Activated T-helper 2 cell treated with anti-CD3 and anti-CD28 coated beads, Interferon-gamma antibody, Interleukin-2, Interleukin-4, amounts not matched to agents 10 μg/mL and 5 μg/mL and 100 μg/mL, durations not matched to agents 14 hours and 24 hours and 36 hours (primary cell): ENCODE measurements at regions of chr19 and their contacts with region 1.

Region 1: GRCh38 chr19:11435058-11435832 is at the starts of genes ODAD3 and PRKCSH:
- DNase-seq: peak; percentile 99
- H3K4me3 Mint-ChIP-seq: peak within 1 kb of the TSS; percentile 96
- H3K27ac Mint-ChIP-seq: peak within 1 kb of the TSS; percentile 89
- H3K4me1 Mint-ChIP-seq: peaks cover 7% of the 10 kb centered on the region
- H3K27me3 Mint-ChIP-seq: no peaks in the 10 kb centered on the region
- total RNA-seq, gene ODAD3: 0.37 TPM in 1 of 2 replicates, not detected in the other
- total RNA-seq, gene PRKCSH: 282 and 298 TPM in 2 replicates

Region 2: DNA sequence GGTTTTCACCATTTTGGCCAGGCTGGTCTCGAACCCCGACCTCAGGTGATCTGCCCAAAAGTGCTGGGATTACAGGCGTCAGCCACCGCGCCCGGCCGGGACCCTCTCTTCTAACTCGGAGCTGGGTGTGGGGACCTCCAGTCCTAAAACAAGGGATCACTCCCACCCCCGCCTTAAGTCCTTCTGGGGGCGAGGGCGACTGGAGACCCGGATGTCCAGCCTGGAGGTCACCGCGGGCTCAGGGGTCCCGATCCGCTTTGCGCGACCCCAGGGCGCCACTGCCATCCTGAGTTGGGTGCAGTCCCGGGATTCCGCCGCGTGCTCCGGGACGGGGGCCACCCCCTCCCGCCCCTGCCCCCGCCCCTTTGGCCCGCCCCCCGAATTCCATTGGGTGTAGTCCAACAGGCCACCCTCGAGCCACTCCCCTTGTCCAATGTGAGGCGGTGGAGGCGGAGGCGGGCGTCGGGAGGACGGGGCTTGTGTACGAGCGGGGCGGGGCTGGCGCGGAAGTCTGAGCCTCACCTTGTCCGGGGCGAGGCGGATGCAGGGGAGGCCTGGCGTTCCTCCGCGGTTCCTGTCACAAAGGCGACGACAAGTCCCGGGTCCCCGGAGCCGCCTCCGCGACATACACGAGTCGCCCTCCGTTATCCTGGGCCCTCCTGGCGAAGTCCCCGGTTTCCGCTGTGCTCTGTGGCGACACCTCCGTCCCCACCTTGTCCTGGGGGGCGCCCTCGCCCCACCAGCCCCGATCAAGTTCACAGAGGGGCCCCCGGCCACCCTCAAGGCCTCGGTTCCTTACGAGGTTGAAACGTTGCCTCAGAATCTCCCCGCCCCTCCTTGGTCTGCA is 345.0 kb before region 1 on chr19:
- intact Hi-C with region 1: loop called (anchors 2 kb)
- DNase-seq: peak; percentile 98
- H3K4me3 Mint-ChIP-seq: peak overlapping the region; percentile 97
- H3K27ac Mint-ChIP-seq: peak overlapping the region; percentile 99
- H3K4me1 Mint-ChIP-seq: peaks cover 40% of the 10 kb centered on the region
- H3K27me3 Mint-ChIP-seq: no peaks in the 10 kb centered on the region

Region 3: GRCh38 chr19:11268783-11269267 is 166.4 kb before region 1 on chr19:
- intact Hi-C with region 1: no loop called
- DNase-seq: no peak
- H3K4me3 Mint-ChIP-seq: no peak overlapping the region
- H3K27ac Mint-ChIP-seq: no peak overlapping the region
- H3K4me1 Mint-ChIP-seq: no peaks in the 10 kb centered on the region
- H3K27me3 Mint-ChIP-seq: peaks cover 46% of the 10 kb centered on the region

Region 4: DNA sequence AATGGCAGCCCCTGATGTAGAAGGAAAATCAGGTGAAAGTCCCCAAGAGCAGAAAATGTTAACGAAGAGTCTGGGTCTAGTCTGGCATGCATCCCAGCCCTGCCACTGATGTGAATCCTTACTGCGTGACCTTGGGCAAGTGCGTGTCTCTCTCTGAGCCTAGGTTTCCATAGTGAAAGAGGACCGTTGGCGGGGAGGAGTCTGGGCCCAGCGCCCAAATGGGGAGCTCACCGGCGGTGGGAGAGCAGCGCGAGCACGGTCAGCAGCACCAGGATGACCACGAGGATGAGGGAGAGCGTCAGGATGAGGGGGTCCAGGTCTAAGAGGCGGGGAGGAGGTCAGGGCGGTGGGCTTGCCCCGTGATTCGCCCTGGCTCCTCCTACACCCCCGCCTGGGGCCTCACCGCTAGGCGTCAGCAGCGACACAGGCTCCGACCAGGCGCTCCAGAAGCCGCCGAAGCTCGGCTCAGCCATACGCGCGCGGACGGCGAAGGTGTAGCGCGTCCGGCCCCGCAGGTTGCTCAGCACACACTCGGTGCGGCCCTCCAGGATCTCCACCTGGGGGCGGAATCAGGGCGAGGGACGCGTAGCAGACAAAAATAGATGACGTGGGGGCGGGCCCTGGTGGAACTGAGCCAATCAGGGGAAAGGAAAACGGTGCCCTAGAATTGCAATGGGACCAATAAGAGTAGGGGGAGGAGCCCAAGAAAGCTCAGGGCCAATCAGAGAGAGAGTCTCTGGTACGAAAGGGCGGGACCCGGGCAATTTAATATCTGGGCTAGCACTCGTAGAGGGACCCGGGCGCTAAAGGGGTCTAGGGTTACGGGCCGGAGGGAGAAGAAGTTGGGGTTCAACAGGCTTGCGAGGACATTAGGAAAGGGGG is 54.4 kb before region 1 on chr19:
- intact Hi-C with region 1: loop called (anchors 1 kb)
- DNase-seq: peak; percentile 97
- H3K4me3 Mint-ChIP-seq: peak overlapping the region; percentile 99
- H3K27ac Mint-ChIP-seq: peak overlapping the region; percentile 100
- H3K4me1 Mint-ChIP-seq: peaks cover 38% of the 10 kb centered on the region
- H3K27me3 Mint-ChIP-seq: peaks cover 12% of the 10 kb centered on the region

Region 5: GRCh38 chr19:11505032-11505503 is 69.8 kb after region 1 on chr19:
- intact Hi-C with region 1: loop called (anchors 1 kb)
- DNase-seq: peak; percentile 95
- H3K4me3 Mint-ChIP-seq: peak overlapping the region; percentile 85
- H3K27ac Mint-ChIP-seq: peak overlapping the region; percentile 80
- H3K4me1 Mint-ChIP-seq: peaks cover 12% of the 10 kb centered on the region
- H3K27me3 Mint-ChIP-seq: no peaks in the 10 kb centered on the region